Activated CD8-positive, alpha-beta T cell treated with anti-CD3 and anti-CD28 coated beads, Interleukin-2, amount 10 ng/mL, durations not matched to agents 7 days and 5 days (primary cell): ENCODE measurements at regions of chr6 and their contacts with region 1.

Region 1: DNA sequence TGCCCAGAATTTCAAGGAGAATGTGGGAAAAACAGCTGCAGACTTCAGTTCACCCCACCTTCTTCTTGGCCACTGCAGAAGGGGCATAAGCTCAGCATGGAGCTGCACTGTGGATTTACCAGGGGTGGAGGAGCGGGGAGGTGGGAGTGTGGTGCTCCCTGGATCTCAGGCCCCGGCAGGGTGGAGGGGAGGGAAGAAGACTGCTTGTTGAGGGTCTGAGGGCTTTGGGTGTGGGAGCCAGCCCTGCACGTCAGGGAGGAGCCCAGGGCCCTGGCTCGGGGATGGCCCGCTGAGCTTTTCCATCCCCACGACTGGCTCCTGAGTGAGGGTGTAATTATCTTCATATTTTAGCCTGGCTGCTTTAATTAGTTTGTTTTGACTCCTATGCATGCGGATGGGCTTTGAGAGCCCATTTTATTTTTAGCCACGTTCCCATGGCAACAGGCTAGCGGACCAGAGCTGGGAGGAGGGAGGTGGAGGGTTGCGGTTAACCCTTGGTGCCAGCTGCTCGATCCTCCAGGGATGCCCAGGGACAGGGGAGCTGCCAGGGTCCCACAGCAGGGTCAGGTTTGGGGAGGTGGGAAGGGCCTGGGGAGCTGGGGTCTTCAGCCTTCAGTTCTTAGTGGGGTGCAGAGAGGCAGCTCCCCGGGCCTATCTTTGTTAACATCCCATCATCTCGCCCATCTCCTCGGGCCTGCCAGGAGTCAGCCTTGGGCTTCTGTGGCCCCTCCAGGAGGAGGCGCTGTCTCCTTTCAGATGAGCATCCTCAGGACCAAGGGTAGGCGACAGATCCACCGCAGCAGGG is 68.2 kb downstream of the RAB44 start:
- DNase-seq: peak; percentile 90
- ATAC-seq: peak; percentile 90
- H3K4me3 Mint-ChIP-seq: no peak overlapping the region
- H3K27ac Mint-ChIP-seq: peak overlapping the region; percentile 14
- H3K4me1 Mint-ChIP-seq: peaks cover 49% of the 10 kb centered on the region
- H3K27me3 Mint-ChIP-seq: no peaks in the 10 kb centered on the region

Region 2: DNA sequence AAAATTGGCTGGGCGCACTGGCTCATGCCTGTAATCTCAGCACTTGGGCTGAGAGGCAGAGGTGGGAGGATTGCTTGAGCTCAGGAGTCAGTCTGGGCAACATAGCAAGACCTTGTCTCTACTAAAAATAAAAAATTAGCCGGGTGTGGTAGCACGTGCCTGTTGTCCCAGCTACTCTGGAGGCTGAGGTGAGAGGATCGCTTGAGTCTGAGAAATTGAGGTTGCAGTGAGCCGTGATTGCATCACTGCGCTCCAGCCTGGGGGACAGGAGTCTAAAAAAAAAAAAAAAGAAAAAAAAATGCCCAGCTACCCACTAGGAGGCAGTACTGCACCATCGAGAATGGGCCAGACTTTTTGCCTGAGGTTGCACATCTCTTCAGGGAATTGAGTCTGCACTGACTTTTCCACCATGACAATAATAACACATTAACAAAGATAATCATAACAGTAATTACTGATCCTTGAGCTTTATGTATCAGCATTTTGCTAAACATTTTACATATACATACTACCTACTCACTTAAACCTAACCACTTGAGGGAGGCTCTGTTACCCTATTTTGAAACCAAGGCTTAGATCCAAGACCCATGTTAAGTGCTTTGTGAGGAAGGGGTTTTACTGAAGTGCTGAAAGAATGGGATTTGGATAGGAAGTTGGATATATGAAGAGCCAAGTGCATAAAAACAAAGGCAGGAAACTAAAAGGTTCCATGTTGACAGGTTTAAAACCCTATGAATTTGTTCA is 150.6 kb before region 1 on chr6:
- CTCF ChIA-PET with region 1: interaction called, 128 read pairs
- POLR2A ChIA-PET with region 1: interaction called, 3 read pairs
- DNase-seq: peak; percentile 57
- ATAC-seq: peak; percentile 38
- H3K4me3 Mint-ChIP-seq: no peak overlapping the region
- H3K27ac Mint-ChIP-seq: no peak overlapping the region
- H3K4me1 Mint-ChIP-seq: peaks cover 8% of the 10 kb centered on the region
- H3K27me3 Mint-ChIP-seq: no peaks in the 10 kb centered on the region

Region 3: DNA sequence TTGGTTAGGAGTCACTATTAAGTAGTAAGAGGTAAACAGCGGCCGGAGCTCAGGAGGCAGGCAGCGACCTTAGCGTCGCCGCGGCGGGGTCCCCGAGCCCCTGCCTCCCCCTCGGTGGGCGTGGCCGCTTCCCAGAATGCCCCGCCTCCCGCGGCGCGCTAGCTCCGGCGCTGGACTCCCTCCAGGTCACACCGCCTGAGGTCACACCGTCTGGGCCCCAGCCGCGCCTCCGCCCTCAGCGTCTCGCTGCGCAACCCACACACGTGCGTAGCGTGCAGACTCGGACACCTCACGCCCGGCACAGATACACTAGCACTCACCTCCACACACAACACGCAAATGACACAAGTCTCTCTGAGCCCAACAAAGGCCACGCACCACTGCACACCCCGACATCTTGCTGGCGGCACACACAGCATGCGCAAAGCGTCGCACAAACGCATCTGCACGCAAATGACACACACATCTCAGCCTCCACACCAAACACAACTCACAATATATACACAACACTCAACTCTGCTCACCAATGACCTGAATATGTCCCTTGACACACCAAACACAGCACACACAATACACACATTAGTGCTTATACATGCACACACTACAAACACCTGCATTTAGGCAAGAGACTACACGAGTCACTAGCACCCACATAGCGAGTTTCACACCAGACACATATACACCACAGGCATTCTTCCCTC is 104.9 kb before region 1 on chr6:
- CTCF ChIA-PET with region 1: no interaction called
- POLR2A ChIA-PET with region 1: no interaction called
- DNase-seq: no peak
- ATAC-seq: no peak
- H3K4me3 Mint-ChIP-seq: no peak overlapping the region
- H3K27ac Mint-ChIP-seq: no peak overlapping the region
- H3K4me1 Mint-ChIP-seq: peaks cover 17% of the 10 kb centered on the region
- H3K27me3 Mint-ChIP-seq: peaks cover 35% of the 10 kb centered on the region

Region 4: DNA sequence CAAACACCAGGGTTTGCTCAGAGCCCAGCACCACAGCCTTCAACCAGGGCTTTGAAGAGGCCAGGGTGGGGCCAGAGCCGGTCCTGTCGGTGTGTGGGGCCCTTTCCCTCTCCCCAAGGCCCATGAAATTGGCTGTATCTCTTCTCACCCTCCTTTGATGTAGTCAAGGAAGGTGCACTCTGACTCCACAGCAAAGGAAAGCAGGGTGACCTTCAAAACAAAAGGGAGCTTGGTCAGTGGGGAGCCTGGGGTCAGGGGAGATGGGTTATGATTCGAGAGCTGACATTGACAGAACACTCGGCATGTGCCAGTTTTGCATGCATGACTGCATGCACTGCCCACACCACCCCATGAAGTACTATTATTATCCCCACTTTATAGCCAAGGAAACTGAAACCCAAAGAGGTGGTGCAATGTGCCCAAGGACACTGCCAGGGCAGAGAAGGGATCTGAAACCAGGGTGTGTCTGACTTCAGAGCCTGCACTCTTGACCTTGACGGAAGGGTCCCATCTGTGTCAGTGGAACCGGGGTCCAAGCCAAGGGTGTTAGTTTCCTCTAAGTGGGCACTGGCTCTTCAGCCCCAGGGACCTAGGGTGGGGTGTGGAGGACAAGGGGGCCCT is 12.8 kb before region 1 on chr6:
- CTCF ChIA-PET with region 1: interaction called, 158 read pairs
- POLR2A ChIA-PET with region 1: interaction called, 3 read pairs
- DNase-seq: no peak
- ATAC-seq: no peak
- H3K4me3 Mint-ChIP-seq: no peak overlapping the region
- H3K27ac Mint-ChIP-seq: peak overlapping the region; percentile 83
- H3K4me1 Mint-ChIP-seq: peaks cover 61% of the 10 kb centered on the region
- H3K27me3 Mint-ChIP-seq: no peaks in the 10 kb centered on the region

Region 5: GRCh38 chr6:36793913-36794712 is 28.3 kb after region 1 on chr6:
- CTCF ChIA-PET with region 1: interaction called, 18 read pairs
- POLR2A ChIA-PET with region 1: no interaction called
- DNase-seq: no peak
- ATAC-seq: no peak
- H3K4me3 Mint-ChIP-seq: no peak overlapping the region
- H3K27ac Mint-ChIP-seq: no peak overlapping the region
- H3K4me1 Mint-ChIP-seq: peaks cover 4% of the 10 kb centered on the region
- H3K27me3 Mint-ChIP-seq: peaks cover 17% of the 10 kb centered on the region

Region 6: DNA sequence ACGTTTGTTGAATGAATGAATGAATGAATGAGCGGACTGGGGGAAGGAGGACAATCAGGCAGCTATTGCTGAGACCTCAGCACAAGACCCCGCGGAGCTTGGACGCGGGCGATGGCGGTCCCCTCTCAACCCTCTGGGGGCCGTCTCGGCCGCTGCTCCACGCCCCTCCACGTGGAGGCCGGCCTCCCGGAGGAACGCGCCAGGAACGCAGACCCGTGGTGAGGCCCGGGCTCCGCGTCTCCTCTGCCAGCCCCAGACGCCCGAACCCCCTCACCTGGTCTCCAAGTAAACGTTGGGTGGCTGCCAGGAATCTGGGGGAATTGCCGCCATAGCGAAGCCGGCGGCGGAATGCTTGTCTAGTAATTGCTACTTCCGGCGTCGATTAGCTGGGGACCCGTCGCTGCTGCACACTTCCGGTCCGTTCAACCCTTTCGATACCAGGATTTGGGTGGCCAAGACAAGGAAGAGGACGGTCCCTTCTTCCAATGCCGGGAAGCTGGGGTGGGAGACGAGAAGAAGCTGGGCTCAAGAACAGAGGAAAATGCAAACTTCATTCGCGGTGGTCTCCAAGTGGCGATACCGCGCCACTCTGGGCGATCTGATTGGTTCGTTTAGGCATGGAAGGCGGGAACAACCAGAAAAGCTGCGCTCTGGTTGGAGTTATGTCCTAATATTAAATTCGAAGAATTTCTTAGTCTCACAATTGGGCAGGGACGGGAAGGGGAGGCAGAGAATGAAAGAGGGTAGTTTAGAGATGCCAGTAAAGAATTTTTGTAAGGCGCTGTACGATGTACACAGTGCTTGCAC is 108.8 kb after region 1 on chr6 and contains the start of gene PPIL1:
- CTCF ChIA-PET with region 1: interaction called, 85 read pairs
- POLR2A ChIA-PET with region 1: interaction called, 4 read pairs
- DNase-seq: peak; percentile 89
- ATAC-seq: peak; percentile 94
- H3K4me3 Mint-ChIP-seq: peak within 1 kb of the TSS; percentile 83
- H3K27ac Mint-ChIP-seq: peak within 1 kb of the TSS; percentile 98
- H3K4me1 Mint-ChIP-seq: peaks cover 47% of the 10 kb centered on the region
- H3K27me3 Mint-ChIP-seq: peaks cover 8% of the 10 kb centered on the region
- total RNA-seq, gene PPIL1: 32.6 to 33.5 TPM